ENCODE measurements at regions of chr19 and their contacts with region 1.

Region 1: GRCh38 chr19:16382775-16383543 is 58.3 kb downstream of the KLF2 start:
- DNase-seq: peak; percentile 85
- CTCF ChIP-seq: peak; percentile 77

Region 2: GRCh38 chr19:15629003-15629880 is 753.7 kb before region 1 on chr19:
- in situ Hi-C with region 1: loop called (anchors 25 kb)
- DNase-seq: peak; percentile 84
- CTCF ChIP-seq: peak; percentile 93

Region 3: GRCh38 chr19:16041299-16041990 is 341.5 kb before region 1 on chr19:
- in situ Hi-C with region 1: loop called (anchors 10 kb)
- DNase-seq: peak; percentile 84
- CTCF ChIP-seq: peak; percentile 95

Region 4: GRCh38 chr19:16208064-16208759 is 174.7 kb before region 1 on chr19:
- in situ Hi-C with region 1: no loop called
- DNase-seq: no peak
- CTCF ChIP-seq: no peak

Region 5: DNA sequence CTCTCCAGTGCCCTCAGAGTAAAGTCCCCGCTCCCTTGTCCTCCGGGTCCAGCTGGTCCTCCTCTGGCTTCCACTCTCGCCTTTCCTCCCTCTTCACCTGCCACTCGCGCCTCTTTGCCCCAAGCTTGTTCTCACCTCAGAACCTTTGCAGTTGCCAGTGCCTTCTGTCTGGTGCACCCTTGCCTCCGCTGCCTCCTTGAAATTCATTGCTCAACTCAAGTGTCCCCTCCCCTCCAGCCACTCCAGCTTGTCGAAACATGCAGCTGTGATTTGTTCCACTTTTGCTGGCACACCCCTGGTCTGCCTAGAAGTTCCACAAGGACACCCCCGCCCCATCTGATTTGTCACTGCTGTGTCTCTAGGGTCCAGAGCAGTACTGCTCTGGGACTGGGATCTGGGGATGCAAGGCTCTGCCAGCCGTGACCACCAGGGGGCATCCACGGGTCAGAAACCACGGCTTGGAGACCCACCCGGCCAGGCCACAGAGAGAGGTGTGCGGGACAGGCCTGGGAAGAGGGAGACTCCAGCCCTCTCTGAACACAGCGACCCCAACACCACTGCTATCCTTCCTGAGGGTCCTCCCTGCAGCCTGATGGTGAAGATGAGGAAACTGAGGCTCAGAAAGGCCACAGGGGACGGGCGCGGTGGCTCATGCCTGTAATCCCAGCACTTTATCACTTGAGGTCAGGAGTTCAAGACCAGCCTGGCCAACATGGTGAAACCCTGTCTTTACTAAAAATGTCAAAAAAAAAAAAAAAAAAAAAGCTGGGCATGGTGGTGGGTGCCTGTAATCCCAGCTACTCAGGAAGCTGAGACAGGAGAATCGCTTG is 135.4 kb before region 1 on chr19:
- in situ Hi-C with region 1: loop called (anchors 5 kb)
- DNase-seq: peak; percentile 91
- CTCF ChIP-seq: peak; percentile 98

Measured in GM13977 (cell line).